ENCODE measurements at regions of chr5 and their contacts with region 1.

Region 1: GRCh38 chr5:180873615-180874520 is 12.8 kb upstream of the ZFP62 start:
- DNase-seq: no peak
- ATAC-seq: peak; percentile 57

Region 2: DNA sequence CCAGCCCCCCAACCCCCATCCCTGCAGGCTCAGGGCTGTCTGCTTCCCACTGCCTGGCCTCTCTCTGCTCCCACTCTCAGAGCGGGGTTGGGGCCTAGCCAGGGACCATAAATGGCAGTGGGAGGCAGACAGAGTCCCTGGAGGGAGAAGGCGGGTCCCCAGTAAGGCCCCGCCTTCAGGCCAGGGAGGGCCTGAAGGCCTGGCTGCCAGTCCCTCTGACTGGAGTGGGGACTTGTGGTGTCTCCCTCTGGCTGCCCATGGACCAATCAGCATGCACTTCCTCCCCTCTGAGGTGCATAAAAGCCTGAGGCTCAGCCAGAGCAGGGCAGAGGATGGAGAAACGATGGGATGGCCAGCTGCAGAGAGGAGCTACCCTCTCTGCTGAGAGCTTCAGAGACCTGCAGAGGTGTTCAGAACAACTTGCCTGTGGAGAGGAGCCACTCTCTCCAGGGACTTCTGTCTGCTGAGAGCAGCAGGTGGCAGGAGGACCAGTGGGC is 163.5 kb after region 1 on chr5:
- intact Hi-C with region 1: loop called (anchors 10 kb)
- DNase-seq: no peak
- ATAC-seq: peak; percentile 31